IMR-90 (cell line): ENCODE measurements at regions of chr9 and their contacts with region 1.

Region 1: DNA sequence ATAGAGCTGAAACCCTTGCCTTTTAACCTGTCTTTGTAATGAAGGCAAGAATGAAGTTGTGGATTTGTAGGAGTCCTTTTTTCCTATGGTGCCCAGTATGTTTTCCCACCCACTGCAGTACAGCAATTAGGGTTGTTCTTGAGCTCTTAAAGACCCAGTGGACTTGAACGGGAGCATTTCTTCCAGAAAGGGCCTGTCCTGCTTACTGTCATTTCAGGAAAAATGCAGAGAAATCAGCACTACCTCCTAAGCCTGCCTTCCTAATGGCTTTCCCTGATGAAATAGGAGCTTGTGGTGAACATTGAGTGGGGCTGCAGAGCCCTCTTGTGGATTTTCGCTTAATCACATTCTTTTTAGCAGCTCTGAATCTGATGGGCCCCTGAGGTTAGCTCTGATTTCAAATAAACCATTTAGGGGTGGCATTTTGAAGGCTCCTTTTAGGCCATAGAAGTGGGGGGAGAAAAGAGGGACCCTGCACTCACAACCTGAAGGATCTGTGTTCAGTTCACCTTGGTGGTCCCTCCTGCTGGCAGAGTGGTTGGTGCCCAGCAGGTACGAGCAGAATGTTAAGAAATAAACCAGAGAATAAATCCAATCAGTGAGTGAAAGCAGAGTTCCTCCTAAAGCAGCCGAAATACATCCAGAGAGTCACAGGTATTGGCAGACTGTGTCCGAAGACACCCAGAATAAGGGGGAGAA is 188.0 kb upstream of the KLF9 start:
- DNase-seq: peak; percentile 91
- ATAC-seq: peak; percentile 60
- H3K4me3 ChIP-seq: no peak overlapping the region
- H3K27ac ChIP-seq: peak overlapping the region; percentile 79
- H3K4me1 ChIP-seq: peaks cover 17% of the 10 kb centered on the region
- H3K27me3 ChIP-seq: no peaks in the 10 kb centered on the region
- CTCF ChIP-seq: peak; percentile 91
- POLR2A ChIP-seq: peak; percentile 62; the same call in 1 of the 2 replicates
- RAD21 ChIP-seq: peak; percentile 96

Region 2: DNA sequence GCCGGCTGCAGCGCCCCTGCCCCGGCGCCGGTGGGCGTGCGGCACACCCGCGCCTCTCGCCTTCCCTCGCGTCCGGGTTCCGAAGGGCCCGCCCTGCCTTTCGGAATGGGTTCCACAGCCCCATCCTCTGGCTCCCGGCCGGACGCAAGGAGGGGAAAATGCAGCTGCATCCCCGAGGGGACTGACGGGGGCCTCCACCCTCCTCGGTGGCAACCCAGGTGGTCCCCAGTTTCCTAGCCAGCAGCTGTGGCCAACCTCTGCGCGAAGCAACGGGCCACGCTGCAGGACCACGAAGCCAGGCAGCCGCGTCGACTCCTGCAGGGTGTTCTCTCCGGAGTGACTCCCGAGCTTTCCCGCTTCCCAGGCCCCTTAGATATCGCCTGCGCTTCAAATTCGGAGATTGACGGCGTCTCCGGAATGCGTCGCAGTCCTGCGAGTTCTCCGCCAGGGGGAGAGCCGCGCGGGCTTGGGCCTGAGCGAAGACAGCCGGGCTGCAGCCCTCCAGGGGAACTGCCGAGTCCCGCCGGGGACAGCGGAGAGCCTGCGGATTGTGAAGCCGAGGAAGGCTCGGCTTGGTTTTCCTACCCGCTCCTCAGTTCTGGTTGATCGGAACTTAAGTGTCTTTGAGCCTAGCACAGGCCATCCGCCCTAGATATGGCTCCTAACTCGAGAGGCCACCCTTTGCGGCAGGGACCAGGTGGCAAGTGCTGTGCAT is 929.7 kb before region 1 on chr9:
- CTCF ChIA-PET with region 1: no interaction called
- POLR2A ChIA-PET with region 1: no interaction called
- dilution Hi-C with region 1: no loop called
- in situ Hi-C with region 1: no loop called
- intact Hi-C with region 1: loop called (anchors 5 kb)
- DNase-seq: peak; percentile 89
- ATAC-seq: peak; percentile 80
- H3K4me3 ChIP-seq: peak overlapping the region; percentile 69
- H3K27ac ChIP-seq: peak overlapping the region; percentile 73
- H3K4me1 ChIP-seq: peaks cover 6% of the 10 kb centered on the region
- H3K27me3 ChIP-seq: no peaks in the 10 kb centered on the region
- CTCF ChIP-seq: peak; percentile 90
- POLR2A ChIP-seq: no peak
- RAD21 ChIP-seq: peak; percentile 80

Region 3: GRCh38 chr9:69971643-69972449 is 630.6 kb before region 1 on chr9:
- CTCF ChIA-PET with region 1: no interaction called
- POLR2A ChIA-PET with region 1: interaction called, 5 read pairs
- dilution Hi-C with region 1: no loop called
- in situ Hi-C with region 1: loop called (anchors 25 kb)
- intact Hi-C with region 1: loop called (anchors 1 kb)
- DNase-seq: peak; percentile 68
- ATAC-seq: peak; percentile 71
- H3K4me3 ChIP-seq: no peak overlapping the region
- H3K27ac ChIP-seq: no peak overlapping the region
- H3K4me1 ChIP-seq: peaks cover 9% of the 10 kb centered on the region
- H3K27me3 ChIP-seq: no peaks in the 10 kb centered on the region
- CTCF ChIP-seq: peak; percentile 90
- POLR2A ChIP-seq: peak; percentile 37; the same call in 1 of the 2 replicates
- RAD21 ChIP-seq: peak; percentile 88

Region 4: DNA sequence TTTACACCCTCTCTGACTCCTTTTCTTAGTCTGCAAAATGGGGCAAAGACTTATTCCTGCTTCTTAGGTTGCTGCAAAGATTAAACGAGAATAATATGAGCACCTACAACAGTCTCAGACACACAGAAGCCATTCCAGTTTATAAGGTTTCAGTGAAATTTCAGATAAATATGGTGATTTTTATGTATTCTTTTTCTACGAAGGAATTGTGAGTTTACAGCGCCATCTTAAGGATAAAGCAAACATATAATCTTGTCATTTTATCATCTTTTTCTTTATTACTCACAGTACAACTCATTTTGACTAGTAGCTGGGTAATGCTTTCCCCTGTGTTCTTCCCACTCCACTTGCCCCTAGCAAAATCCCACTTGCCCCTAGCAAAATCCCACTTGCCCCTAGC is 372.9 kb before region 1 on chr9:
- CTCF ChIA-PET with region 1: no interaction called
- POLR2A ChIA-PET with region 1: no interaction called
- dilution Hi-C with region 1: no loop called
- in situ Hi-C with region 1: no loop called
- intact Hi-C with region 1: loop called (anchors 1 kb)
- DNase-seq: peak; percentile 68
- ATAC-seq: peak; percentile 88
- H3K4me3 ChIP-seq: no peak overlapping the region
- H3K27ac ChIP-seq: no peak overlapping the region
- H3K4me1 ChIP-seq: peaks cover 7% of the 10 kb centered on the region
- H3K27me3 ChIP-seq: no peaks in the 10 kb centered on the region
- CTCF ChIP-seq: peak; percentile 65
- POLR2A ChIP-seq: no peak
- RAD21 ChIP-seq: peak; percentile 80

Region 5: DNA sequence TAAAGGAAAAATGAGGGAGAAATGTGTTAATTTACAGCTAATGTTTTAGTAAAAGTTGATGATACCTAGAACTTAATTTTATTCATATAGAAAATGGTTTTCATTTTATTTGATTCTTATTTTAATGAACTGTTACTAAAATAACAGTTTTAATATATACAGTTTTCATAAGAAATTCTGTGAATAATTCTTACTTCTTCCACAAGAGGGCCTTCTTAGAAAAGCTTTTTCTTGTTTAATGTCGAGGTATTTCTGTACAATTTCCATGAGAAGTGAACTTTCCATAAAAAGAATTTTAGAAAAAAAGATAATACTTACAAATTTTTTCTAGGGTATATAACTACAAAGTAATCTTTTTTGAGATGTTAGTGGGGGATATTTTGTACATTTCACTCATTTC is 261.9 kb before region 1 on chr9:
- CTCF ChIA-PET with region 1: interaction called, 15 read pairs
- POLR2A ChIA-PET with region 1: interaction called, 3 read pairs
- dilution Hi-C with region 1: no loop called
- in situ Hi-C with region 1: loop called (anchors 5 kb)
- intact Hi-C with region 1: loop called (anchors 1 kb)
- DNase-seq: peak; percentile 57
- ATAC-seq: no peak
- H3K4me3 ChIP-seq: no peak overlapping the region
- H3K27ac ChIP-seq: no peak overlapping the region
- H3K4me1 ChIP-seq: no peaks in the 10 kb centered on the region
- H3K27me3 ChIP-seq: no peaks in the 10 kb centered on the region
- CTCF ChIP-seq: peak; percentile 55
- POLR2A ChIP-seq: no peak
- RAD21 ChIP-seq: peak; percentile 63

Region 6: GRCh38 chr9:70413798-70414775 is 188.4 kb before region 1 on chr9 and contains the start of gene KLF9:
- CTCF ChIA-PET with region 1: interaction called, 6 read pairs
- POLR2A ChIA-PET with region 1: interaction called, 5 read pairs
- dilution Hi-C with region 1: no loop called
- in situ Hi-C with region 1: loop called (anchors 5 kb)
- intact Hi-C with region 1: loop called (anchors 1 kb)
- DNase-seq: peak; percentile 97
- ATAC-seq: peak; percentile 83
- H3K4me3 ChIP-seq: peak within 1 kb of the TSS; percentile 85
- H3K27ac ChIP-seq: peak within 1 kb of the TSS; percentile 92
- H3K4me1 ChIP-seq: peaks cover 7% of the 10 kb centered on the region
- H3K27me3 ChIP-seq: no peaks in the 10 kb centered on the region
- CTCF ChIP-seq: 0 out of 2 replicates have a peak, but pooled peaks have one; percentile 7
- POLR2A ChIP-seq: peak; percentile 97
- RAD21 ChIP-seq: peak; percentile 7
- total RNA-seq, gene KLF9: 7.5 and 11.4 TPM in 2 replicates